OCI-LY7 (cell line): ENCODE measurements at regions of chr3 and their contacts with region 1.

Region 1: DNA sequence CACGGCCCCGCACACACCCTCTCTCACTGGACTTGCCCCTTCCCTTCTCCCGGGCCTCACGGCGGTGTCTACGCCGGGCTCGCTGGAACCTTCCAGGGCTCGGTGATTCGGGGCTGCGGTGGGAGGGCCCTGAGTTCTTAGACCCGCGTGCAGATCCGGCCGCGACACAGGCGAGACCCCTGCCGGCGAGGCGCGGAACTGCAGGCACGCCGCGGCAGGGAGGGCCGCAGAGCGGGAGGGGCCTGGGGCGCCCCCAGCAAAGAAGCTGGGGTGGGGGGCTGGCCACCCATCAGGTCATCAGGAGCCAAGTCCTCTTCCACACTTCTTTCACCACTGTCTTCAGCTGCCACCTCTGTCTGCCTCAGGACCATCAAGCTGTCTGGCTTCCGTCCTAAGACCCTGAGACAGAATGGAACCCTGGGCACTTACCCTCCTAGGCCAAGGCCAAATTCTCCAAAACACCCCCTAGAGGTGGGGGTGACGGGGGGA is 164.5 kb downstream of the XXYLT1 start:
- DNase-seq: peak; percentile 69
- H3K4me3 ChIP-seq: no peak overlapping the region
- H3K27ac ChIP-seq: no peak overlapping the region
- H3K4me1 ChIP-seq: peaks cover 11% of the 10 kb centered on the region
- CTCF ChIP-seq: peak; percentile 95

Region 2: DNA sequence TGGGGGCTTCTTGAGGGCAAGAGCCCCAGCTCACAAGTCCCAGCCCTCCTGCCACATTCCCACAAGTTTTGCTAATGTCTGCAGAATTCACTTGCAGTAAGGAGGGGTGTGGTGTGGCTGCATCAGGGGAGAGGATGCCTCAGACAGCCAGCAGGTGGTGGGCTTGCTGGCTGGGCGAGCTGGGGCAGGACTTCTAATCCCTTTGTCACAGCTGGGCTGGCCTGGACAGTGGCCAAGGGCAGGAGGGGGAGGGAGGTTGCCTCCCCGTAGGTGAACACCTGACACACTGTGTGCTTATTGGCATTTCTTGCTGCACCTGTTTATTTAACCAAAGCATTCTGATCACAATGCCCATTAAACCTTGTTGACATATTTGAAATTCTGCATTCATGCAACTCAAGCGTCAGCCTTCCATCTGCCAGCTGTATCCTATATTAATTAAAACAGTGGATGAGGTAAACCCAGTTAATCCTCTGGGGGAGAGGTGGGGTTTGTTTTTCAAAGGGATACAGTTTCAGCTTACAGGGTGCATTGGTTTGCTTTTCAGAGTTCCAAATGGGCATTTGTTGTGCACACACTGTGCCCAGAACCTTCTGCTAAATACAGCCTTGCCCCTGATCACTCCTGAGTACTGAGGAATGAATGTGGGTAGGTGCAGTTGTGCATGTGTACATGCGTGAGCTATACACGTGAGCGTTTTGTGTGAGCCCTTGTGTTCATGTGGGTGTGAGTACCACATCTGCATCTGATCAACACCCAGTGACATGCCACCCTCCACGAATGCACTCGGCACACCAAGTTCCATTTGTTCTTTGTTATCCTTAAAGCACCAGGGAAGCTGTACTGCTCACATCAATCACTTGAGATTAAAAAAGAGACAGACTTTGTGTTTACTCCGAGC is 104.3 kb before region 1 on chr3:
- CTCF ChIA-PET with region 1: interaction called, 3 read pairs
- POLR2A ChIA-PET with region 1: no interaction called
- intact Hi-C with region 1: loop called (anchors 1 kb)
- DNase-seq: peak; percentile 58
- H3K4me3 ChIP-seq: no peak overlapping the region
- H3K27ac ChIP-seq: no peak overlapping the region
- H3K4me1 ChIP-seq: peaks cover 4% of the 10 kb centered on the region
- CTCF ChIP-seq: peak; percentile 80